H1 (cell line): ENCODE measurements at regions of chr17 and their contacts with region 1.

Region 1: DNA sequence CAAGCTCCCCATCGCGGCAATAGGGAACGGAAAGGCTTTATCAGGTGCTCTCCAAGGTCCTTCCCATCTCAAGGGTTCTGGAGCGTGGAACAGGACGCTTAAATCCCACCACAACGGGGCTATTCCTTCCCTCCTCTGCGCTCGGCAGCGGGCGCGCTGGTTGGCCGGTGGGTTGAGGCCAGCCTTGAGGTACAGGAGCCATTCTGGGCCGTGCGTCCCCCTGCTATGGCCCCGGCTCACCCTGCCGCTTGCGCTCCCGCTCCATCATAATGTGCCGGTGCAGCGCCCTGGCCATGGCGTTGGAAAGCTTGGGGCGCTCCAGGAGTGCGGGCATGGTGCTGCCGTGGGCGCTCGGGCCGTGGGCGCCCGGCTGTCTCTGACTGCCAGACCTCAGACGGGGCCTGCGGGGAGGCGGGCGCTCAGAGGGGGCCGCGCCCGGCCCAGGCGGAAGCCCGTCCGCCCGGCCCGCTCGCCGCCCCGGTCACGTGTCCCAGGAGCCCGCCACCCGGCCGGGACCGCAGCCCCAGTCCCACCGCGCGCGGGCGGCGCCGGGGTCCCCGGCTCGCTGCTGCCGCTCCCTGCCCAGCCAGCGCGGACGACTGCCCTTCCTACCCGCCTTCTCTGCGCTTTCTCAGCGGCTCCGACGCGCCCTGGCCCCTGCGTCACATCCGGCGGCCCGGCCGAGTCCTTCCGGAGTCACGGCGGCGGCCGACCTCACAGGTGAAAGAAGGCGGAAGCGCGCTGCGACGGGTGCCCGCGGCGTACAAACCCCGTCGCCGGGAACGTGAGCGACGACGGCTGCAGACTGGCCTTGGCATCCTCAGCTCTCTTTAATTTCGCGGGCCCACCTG is at the start of gene GPS2:
- DNase-seq: peak in 1 of 2 experiments; percentile 96
- H3K4me3 ChIP-seq: peak within 1 kb of the TSS; percentile 55 to 95 (median 70)
- H3K27ac ChIP-seq: peak within 1 kb of the TSS; percentile 61; the same call in 1 of the 2 replicates
- H3K4me1 ChIP-seq: peaks cover 0 to 7% (median 4%) of the 10 kb centered on the region in 4 experiments; a peak in 4 of 7 replicates
- H3K27me3 ChIP-seq: no peaks in the 10 kb centered on the region
- CTCF ChIP-seq: no peak
- EP300 ChIP-seq: peak in 1 of 2 experiments; percentile 84; a peak in 1 of 3 replicates
- POLR2A ChIP-seq: peak in 1 of 2 experiments; percentile 87; a peak in 2 of 3 replicates
- RAD21 ChIP-seq: no peak
- total RNA-seq, gene GPS2: 67.0 and 74.8 TPM in 2 replicates

Region 2: GRCh38 chr17:7156342-7156940 is 158.5 kb before region 1 on chr17:
- CTCF ChIA-PET with region 1: no interaction called
- POLR2A ChIA-PET with region 1: no interaction called
- DNase-seq: no peak
- H3K4me3 ChIP-seq: no peak overlapping the region
- H3K27ac ChIP-seq: no peak overlapping the region
- H3K4me1 ChIP-seq: no peaks in the 10 kb centered on the region
- H3K27me3 ChIP-seq: no peaks in the 10 kb centered on the region; a peak in 1 of 7 replicates
- CTCF ChIP-seq: no peak
- EP300 ChIP-seq: no peak
- POLR2A ChIP-seq: no peak
- RAD21 ChIP-seq: no peak

Region 3: DNA sequence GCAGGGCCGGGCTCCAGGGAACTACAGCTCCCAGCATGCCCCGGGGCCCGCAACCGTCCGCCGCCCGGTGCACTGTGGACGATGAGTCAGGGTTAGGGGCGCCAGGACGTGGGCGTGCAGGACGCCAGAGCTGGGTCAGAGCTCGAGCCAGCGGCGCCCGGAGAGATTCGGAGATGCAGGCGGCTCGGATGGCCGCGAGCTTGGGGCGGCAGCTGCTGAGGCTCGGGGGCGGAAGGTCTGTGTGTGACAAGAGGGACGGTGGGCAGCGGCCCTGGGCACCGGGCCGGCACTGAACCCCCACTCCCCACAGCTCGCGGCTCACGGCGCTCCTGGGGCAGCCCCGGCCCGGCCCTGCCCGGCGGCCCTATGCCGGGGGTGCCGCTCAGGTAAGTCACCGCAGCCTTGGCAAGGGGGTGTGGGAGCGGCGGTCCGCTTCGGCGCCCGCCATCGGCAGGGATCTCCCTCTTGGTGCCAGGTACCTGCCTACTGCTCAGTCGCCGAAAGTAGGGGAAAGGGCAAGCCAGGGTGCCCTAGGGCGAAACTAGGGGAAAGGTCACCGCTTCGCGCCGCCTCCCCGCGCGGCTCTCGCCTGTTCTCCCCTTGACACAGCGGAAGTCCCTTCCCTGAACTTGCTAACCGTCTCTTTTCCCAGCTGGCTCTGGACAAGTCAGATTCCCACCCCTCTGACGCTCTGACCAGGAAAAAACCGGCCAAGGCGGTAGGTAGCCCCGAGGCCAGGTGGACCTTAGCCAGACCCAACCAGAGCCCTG is 94.9 kb before region 1 on chr17 and contains the starts of genes ACADVL and DLG4:
- CTCF ChIA-PET with region 1: interaction called, 4 read pairs
- POLR2A ChIA-PET with region 1: interaction called, 54 read pairs
- DNase-seq: peak in 1 of 2 experiments; percentile 90
- H3K4me3 ChIP-seq: peak within 1 kb of the TSS; percentile 76 to 93 (median 86)
- H3K27ac ChIP-seq: peak within 1 kb of the TSS; percentile 49
- H3K4me1 ChIP-seq: peaks cover 6 to 36% (median 20%) of the 10 kb centered on the region in 4 experiments
- H3K27me3 ChIP-seq: no peaks in the 10 kb centered on the region
- CTCF ChIP-seq: no peak
- EP300 ChIP-seq: no peak
- POLR2A ChIP-seq: peak; percentile 79 to 90
- RAD21 ChIP-seq: no peak
- total RNA-seq, gene ACADVL: 169 and 181 TPM in 2 replicates
- total RNA-seq, gene DLG4: 43.1 and 45.9 TPM in 2 replicates

Region 4: GRCh38 chr17:7239091-7240027 is 75.6 kb before region 1 on chr17 and contains the start of gene PHF23:
- CTCF ChIA-PET with region 1: interaction called, 4 read pairs
- POLR2A ChIA-PET with region 1: interaction called, 22 read pairs
- DNase-seq: peak; percentile 94 to 99
- H3K4me3 ChIP-seq: peak within 1 kb of the TSS; percentile 91 to 97 (median 94)
- H3K27ac ChIP-seq: peak within 1 kb of the TSS; percentile 63
- H3K4me1 ChIP-seq: peaks cover 5 to 24% (median 12%) of the 10 kb centered on the region in 4 experiments
- H3K27me3 ChIP-seq: no peaks in the 10 kb centered on the region
- CTCF ChIP-seq: no peak
- EP300 ChIP-seq: no peak
- POLR2A ChIP-seq: peak; percentile 27 to 36; a peak in 1 of 3 replicates
- RAD21 ChIP-seq: no peak
- total RNA-seq, gene PHF23: 62.8 and 65.1 TPM in 2 replicates

Region 5: DNA sequence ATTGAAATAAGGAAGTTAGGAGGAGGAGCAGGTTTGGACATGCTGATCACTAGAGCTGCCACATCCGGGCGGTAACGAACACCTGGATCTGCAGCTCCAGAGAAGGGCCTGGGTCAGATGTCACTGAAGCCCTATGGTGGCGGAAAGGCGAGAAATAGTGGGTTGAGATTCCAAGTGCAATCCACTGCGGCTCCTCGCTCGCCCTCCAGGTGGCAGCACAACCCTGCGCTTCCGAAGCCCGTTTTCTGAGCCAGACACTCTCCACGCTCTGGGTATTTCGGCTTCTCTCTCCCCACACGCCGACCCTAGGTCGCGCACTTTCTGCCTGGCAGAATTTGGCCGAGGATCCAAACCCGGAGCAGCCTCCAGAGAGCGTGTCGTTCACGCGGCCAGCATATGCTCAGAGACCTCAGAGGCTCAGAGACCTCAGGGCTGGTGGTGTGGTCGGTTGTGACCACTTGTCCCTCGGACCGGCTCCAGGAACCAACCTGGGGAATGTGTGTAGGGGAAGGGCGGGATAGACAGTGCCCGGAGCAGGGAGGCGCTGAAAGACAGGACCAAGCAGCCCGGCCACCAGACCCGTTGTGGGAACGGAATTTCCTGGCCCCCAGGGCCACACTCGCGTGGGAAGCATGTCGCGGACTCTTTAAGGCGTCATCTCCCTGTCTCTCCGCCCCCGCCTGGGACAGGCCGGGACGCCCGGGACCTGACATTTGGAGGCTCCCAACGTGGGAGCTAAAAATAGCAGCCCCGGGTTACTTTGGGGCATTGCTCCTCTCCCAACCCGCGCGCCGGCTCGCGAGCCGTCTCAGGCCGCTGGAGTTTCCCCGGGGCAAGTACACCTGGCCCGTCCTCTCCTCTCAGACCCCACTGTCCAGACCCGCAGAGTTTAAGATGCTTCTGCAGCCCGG is 34.2 kb before region 1 on chr17:
- CTCF ChIA-PET with region 1: interaction called, 7 read pairs
- POLR2A ChIA-PET with region 1: interaction called, 37 read pairs
- DNase-seq: peak; percentile 87 to 97
- H3K4me3 ChIP-seq: peak overlapping the region; percentile 14 to 77 (median 61)
- H3K27ac ChIP-seq: no peak overlapping the region
- H3K4me1 ChIP-seq: peaks cover 0 to 20% (median 8%) of the 10 kb centered on the region in 4 experiments; a peak in 5 of 7 replicates
- H3K27me3 ChIP-seq: peaks cover 0 to 13% (median 7%) of the 10 kb centered on the region in 4 experiments; a peak in 6 of 7 replicates
- CTCF ChIP-seq: peak; percentile 94 to 100 (median 97)
- EP300 ChIP-seq: peak in 1 of 2 experiments; percentile 10; a peak in 1 of 3 replicates
- POLR2A ChIP-seq: peak in 1 of 2 experiments; percentile 79; a peak in 2 of 3 replicates
- RAD21 ChIP-seq: peak; percentile 95 to 96

Region 6: GRCh38 chr17:7329374-7329996 is 14.5 kb after region 1 on chr17:
- CTCF ChIA-PET with region 1: interaction called, 19 read pairs
- POLR2A ChIA-PET with region 1: interaction called, 223 read pairs
- DNase-seq: peak; percentile 95 to 99
- H3K4me3 ChIP-seq: peak overlapping the region; percentile 69 to 97 (median 82)
- H3K27ac ChIP-seq: peak overlapping the region; percentile 84
- H3K4me1 ChIP-seq: peaks cover 0 to 19% (median 8%) of the 10 kb centered on the region in 4 experiments; a peak in 6 of 7 replicates
- H3K27me3 ChIP-seq: no peaks in the 10 kb centered on the region; a peak in 1 of 7 replicates
- CTCF ChIP-seq: no peak
- EP300 ChIP-seq: no peak; a peak in 1 of 3 replicates
- POLR2A ChIP-seq: peak in 1 of 2 experiments; percentile 80; a peak in 2 of 3 replicates
- RAD21 ChIP-seq: peak in 1 of 2 experiments; percentile 3; a peak in 1 of 4 replicates

Region 7: DNA sequence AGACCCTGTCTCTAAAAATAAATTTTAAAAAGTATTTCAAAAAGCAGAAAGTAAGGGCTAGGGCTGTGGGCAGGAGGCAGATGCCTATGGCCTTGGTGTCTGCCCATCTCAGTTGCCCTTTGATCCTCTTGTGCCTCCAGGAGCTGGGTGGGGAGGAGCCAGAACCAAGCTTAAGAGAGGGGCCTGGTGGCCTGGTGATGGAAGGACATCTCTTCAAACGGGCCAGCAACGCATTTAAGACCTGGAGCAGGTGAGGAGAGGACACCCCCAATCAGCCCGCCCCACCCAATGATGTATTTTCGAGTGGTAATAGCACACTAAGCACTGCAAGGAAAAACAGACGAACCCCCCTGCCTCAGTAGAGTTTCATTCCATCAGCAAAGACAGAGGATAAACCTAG is 29.5 kb after region 1 on chr17:
- CTCF ChIA-PET with region 1: interaction called, 24 read pairs
- POLR2A ChIA-PET with region 1: interaction called, 93 read pairs
- DNase-seq: no peak
- H3K4me3 ChIP-seq: no peak overlapping the region
- H3K27ac ChIP-seq: no peak overlapping the region
- H3K4me1 ChIP-seq: peaks cover 0 to 3% (median 1%) of the 10 kb centered on the region in 4 experiments; a peak in 5 of 7 replicates
- H3K27me3 ChIP-seq: no peaks in the 10 kb centered on the region
- CTCF ChIP-seq: no peak
- EP300 ChIP-seq: no peak
- POLR2A ChIP-seq: no peak
- RAD21 ChIP-seq: no peak

Region 8: GRCh38 chr17:7383742-7384488 is 69.0 kb after region 1 on chr17:
- CTCF ChIA-PET with region 1: no interaction called
- POLR2A ChIA-PET with region 1: interaction called, 10 read pairs
- DNase-seq: peak in 1 of 2 experiments; percentile 92
- H3K4me3 ChIP-seq: peak overlapping the region; percentile 36 to 60 (median 46)
- H3K27ac ChIP-seq: no peak overlapping the region
- H3K4me1 ChIP-seq: peaks cover 0 to 17% (median 10%) of the 10 kb centered on the region in 4 experiments; a peak in 6 of 7 replicates
- H3K27me3 ChIP-seq: peaks cover 0 to 39% (median 29%) of the 10 kb centered on the region in 4 experiments; a peak in 6 of 7 replicates
- CTCF ChIP-seq: no peak
- EP300 ChIP-seq: no peak
- POLR2A ChIP-seq: peak in 1 of 2 experiments; percentile 28; a peak in 1 of 3 replicates
- RAD21 ChIP-seq: no peak